Activated CD8-positive, alpha-beta T cell treated with anti-CD3 and anti-CD28 coated beads for 36 hours (primary cell): ENCODE measurements at regions of chr12 and their contacts with region 1.

Region 1: DNA sequence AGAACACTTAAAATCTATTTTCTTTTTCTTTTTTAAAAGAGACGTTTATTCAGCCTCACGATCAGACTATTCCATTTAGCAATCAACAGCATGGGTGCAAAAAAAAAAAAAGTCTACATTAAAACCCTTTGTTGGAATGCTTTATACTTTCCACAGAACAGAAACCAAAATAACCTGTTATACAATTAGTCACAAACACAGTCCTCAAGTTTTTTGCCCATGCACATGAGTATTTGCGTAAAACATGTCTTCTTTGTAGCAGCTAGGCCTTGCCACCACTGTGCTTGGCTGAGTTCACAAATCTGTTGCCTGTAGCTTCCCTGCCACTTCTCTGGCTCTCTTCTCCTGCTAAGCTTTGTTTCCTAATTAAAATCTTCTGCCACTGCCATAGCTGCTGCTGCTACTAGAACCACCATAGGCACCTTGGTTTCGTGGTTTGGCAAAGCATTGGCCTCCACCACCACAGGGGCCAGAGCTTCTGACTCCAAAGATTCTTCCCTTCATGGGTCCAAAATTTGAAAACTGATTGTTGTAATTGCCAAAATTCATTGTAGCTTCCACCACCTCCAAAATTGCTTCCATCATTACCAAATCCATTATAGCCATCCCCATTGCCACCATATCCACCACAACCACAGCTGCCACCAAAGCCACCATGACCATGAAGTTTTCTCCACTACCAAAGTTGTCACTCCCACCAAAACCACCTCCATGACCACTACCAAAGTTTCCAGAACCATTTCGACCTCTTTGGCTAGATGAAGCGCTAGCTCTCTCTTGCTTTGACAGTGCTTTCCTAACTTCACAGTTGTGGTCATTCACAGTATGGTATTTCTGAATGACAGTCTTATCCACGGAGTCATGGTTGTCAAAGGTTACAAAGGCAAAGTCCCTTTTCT is 38.1 kb downstream of the KLRG1 start:
- DNase-seq: peak; percentile 76
- ATAC-seq: no peak
- H3K4me3 Mint-ChIP-seq: peak overlapping the region; percentile 60
- H3K27ac Mint-ChIP-seq: peak overlapping the region; percentile 94
- H3K4me1 Mint-ChIP-seq: peaks cover 40% of the 10 kb centered on the region
- H3K27me3 Mint-ChIP-seq: peaks cover 2% of the 10 kb centered on the region
- CTCF ChIP-seq: no peak

Region 2: DNA sequence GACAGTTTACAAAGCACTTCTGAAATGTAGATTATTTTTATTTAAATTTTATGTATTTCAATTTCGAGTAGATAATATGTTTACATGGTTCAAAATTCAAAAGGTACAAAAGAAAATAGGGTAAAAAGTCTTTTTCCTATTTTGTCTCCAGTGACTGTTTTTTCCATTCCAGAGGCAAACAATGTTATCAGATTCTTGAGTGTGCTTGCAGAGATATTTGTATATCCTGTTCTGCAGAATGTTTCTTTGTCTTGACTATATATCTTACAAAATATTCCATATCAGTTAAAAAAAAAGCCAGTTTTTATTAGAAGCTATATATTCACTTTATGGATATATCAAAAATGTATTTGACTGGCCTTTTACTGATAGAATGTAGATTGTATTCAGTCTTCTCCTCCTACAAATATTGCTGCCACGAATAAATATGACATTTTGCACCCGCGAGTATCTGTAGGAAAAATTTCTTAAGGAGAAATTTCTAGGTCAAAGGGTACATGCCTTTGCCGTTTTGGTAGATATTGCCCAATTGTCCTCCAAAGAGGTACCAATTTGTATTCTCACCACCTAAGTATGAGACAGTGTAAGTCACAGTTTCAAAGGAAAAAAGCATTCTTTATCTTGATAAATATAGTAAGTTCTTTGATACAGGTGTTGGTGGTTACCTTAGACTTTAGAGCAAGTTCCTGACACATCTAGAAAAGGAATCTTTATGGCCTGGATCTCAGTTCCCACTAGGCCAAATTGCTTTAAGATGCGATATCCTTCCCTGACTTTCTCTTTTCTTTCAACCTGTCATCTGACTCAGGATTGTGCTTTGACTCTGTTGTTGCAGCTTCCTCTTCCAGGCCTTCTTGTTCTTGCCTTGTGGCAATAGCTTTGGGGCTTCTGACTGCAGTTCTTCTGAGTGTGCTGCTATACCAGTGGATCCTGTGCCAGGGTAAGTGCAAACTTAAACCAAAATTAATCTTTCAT is 35.8 kb before region 1 on chr12:
- CTCF ChIA-PET with region 1: interaction called, 5 read pairs
- POLR2A ChIA-PET with region 1: interaction called, 3 read pairs
- intact Hi-C with region 1: loop called (anchors 5 kb)
- DNase-seq: no peak
- ATAC-seq: peak; percentile 22
- H3K4me3 Mint-ChIP-seq: peak overlapping the region; percentile 74
- H3K27ac Mint-ChIP-seq: peak overlapping the region; percentile 81
- H3K4me1 Mint-ChIP-seq: peaks cover 63% of the 10 kb centered on the region
- H3K27me3 Mint-ChIP-seq: no peaks in the 10 kb centered on the region
- CTCF ChIP-seq: no peak

Region 3: DNA sequence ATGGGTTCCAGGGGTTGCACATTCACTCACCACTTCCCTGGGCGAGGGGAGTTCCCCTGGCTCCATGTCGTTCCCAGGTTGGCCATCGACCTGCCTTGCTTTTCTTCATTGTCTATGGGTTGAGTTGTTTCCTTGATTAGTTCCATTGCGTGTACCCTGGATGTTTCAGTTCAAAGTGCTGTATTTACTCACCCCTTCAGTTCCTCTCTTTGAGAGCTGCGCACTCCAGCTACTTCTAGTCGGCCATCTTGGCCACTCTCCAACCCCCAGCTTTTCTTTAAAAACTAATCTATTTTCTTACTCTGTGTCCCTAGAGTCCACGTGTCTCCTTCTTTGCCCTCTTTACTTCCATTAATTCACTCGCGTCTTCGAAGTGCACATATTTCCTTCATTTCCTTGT is 893.0 kb after region 1 on chr12:
- CTCF ChIA-PET with region 1: no interaction called
- POLR2A ChIA-PET with region 1: no interaction called
- intact Hi-C with region 1: no loop called
- DNase-seq: no peak
- ATAC-seq: no peak
- H3K4me3 Mint-ChIP-seq: no peak overlapping the region
- H3K27ac Mint-ChIP-seq: no peak overlapping the region
- H3K4me1 Mint-ChIP-seq: peaks cover 14% of the 10 kb centered on the region
- H3K27me3 Mint-ChIP-seq: no peaks in the 10 kb centered on the region
- CTCF ChIP-seq: no peak